ENCODE measurements at regions of chr19 and their contacts with region 1.

Region 1: DNA sequence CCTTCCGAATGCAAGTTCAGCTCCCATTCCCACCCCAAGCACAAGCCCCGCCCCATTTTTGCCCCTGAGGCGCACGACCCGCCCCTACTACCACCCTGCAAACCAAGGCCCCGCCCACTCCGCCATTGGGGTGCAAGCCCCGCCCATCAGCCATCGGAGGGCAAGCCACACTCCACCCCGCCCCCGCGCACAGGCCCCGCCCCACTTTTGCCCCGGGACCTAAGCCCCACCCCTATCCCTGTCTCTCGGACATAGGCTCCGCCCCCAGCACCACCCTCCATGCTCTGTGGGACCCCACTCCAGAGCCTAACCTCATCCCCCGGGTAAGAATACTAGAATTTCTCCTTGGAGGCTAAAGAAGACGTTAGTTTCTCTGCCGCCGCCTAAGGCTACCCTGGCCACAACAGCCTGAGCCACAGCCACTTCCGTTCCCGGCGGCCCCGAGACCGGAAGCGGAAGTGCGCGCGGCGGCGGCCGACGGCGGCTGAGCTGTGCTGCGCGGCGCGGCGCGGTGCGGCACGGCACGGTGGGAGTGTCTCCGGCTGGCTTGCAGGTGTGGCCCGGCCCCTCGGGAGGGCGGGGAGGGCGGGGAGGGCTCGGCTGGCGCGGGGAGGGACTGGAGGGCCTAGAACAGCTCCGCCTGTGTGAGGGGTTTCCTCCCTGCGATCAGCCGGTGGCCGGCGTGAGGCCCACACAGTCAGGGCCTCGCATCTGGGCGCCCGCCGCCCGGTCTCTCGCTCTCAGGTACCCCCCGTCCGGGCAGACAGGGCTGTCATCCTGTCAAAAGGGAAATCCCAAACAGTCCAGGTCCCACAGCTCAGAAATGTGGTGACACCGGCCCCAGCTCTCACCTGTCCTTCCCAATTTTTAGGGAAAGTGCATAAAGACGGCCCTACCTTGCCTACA is at the start of gene ZNF333:
- DNase-seq: peak; percentile 98 to 100 (median 99)
- ATAC-seq: peak; percentile 98
- H3K4me3 ChIP-seq: peak within 1 kb of the TSS; percentile 63
- H3K4me1 ChIP-seq: peaks cover 8% of the 10 kb centered on the region
- CTCF ChIP-seq: no peak
- total RNA-seq, gene ZNF333: 8.7 to 25.9 (median 10.7) TPM

Region 2: DNA sequence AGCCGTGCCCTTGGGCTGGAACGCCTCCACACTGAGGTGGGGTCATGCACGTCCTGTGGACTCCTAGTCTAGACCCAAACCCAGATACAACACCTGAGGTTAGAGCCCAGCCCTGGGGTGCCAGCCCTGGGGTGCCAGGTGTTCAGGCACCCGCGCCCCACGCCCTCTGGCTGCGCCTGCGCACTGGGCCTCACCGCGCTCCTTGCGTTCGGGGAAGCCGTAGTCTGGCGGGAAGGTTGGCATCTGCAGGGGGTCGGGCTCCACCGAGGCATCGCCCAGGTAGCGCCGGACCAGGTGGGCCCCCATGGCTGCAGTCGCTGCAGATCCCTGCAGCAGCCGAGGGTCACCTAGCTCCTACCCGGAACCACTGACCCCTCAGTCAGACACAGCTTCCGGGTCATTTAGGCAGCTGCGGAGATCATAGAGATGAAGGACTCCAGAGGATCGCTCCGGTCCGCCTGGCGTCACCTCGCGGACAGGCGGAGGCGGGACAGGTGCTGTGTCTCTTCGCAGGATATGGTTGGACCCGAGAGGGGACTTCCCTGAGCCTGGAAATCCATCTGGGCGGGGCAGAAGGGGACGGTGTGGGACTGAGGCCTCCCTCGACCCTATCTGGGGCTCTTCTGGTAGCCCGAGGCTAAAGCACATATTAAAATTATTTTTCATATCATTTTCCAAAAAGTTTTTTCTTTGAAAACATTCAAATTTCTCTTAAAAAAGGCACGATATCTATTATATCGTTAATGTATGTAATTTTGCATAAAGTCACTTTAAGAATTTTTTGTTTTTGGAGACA is 118.0 kb before region 1 on chr19 and contains the start of gene NDUFB7:
- intact Hi-C with region 1: loop called (anchors 5 to 10 kb)
- DNase-seq: peak; percentile 91 to 94 (median 92)
- ATAC-seq: peak; percentile 96
- H3K4me3 ChIP-seq: peak within 1 kb of the TSS; percentile 50
- H3K4me1 ChIP-seq: peaks cover 28% of the 10 kb centered on the region
- CTCF ChIP-seq: peak; percentile 68
- total RNA-seq, gene NDUFB7: 172 to 255 (median 241) TPM

Measured in mucosa of descending colon (tissue), 3 donors.